Activated CD8-positive, alpha-beta T cell treated with anti-CD3 and anti-CD28 coated beads for 36 hours (primary cell): ENCODE measurements at regions of chr12 and their contacts with region 1.

Region 1: DNA sequence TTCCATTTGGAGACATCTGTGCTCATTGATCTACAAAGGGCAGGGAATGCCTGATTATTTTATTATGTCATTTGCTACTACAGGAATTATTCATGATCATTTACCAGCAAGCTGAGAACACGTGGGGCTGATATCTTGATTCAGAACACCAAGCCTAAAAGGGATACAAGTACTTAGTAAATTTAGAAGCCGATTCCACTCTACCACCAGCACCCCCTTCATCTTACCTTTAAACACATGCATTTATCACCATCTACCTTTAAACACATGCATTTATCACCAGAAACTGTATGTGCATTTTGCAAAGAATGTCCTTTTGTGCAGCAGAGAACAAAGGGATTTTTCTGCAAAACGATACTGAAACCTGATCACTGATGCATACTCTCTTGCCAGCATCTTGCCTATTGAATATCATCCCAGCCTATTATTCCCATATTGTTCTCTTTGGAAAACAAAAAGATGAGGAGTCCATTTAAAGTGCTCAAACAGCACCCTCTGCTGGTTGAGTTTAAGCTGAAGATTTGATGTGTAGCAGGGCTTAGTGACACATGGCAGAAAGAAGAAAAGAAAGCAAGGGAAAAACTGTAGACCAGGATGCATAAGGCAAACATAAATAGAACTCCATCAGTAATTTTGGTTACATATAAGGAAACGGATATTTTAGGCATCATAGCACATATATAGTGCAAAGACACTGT is 132.6 kb upstream of the PLEKHG7 start:
- DNase-seq: peak; percentile 66
- ATAC-seq: peak; percentile 89
- H3K4me3 Mint-ChIP-seq: no peak overlapping the region
- H3K27ac Mint-ChIP-seq: no peak overlapping the region
- H3K4me1 Mint-ChIP-seq: peaks cover 19% of the 10 kb centered on the region
- H3K27me3 Mint-ChIP-seq: no peaks in the 10 kb centered on the region
- CTCF ChIP-seq: peak; percentile 97

Region 2: DNA sequence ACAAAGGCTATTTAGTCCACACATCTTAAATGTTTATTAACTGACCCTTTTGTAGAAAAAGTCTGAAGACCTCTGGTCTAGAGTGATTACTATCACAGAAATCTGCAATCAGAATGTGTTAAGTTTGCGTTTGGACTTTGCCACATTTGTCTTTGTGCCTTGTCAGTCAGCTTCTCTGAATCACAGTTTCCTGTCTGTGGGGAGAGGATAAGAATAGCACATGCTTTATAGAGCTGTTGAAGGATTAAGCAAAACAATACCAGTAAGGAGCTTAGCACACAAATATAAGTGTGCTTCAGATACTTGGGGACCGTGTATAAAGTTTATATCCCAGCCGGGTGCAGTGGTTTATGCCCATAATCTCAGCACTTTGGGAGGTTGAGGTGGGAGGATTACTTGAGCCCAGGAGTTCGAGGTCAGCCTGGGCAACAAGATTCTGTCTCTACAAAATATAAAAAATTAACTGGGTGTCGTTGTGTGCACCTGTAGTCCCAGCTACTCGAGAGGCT is 361.5 kb before region 1 on chr12:
- CTCF ChIA-PET with region 1: interaction called, 3 read pairs
- POLR2A ChIA-PET with region 1: no interaction called
- intact Hi-C with region 1: loop called (anchors 5 kb)
- DNase-seq: peak; percentile 39
- ATAC-seq: peak; percentile 65
- H3K4me3 Mint-ChIP-seq: peak overlapping the region; percentile 67
- H3K27ac Mint-ChIP-seq: peak overlapping the region; percentile 96
- H3K4me1 Mint-ChIP-seq: peaks cover 33% of the 10 kb centered on the region
- H3K27me3 Mint-ChIP-seq: no peaks in the 10 kb centered on the region
- CTCF ChIP-seq: no peak

Region 3: DNA sequence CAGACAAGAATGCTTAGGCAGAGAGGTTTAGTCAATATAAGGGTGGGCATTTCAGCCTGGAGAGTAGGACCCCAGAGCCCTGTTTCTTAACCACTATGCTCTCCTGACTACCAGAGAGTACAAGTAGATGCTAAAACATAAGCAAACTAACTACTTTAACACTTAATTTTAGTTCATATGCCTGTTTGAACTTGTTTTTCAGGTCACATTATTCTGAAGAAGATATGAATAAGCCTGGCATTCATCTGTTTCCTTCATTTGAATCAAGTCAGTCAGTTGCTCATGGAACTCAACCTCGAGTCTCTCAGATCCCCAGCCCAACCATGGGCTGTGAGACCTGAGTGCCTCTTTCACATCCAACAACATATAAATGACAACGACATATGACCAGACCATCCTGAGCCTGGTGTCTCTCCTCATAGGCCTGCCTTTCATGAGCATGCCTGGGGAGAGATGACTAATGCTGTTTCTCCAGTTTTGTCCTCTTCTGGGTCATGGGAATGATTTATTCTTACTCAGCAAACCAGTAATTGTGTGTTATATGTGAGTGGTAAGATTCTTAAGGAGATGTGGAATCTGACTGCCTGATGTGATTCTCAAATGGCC is 173.5 kb before region 1 on chr12:
- CTCF ChIA-PET with region 1: interaction called, 10 read pairs
- POLR2A ChIA-PET with region 1: no interaction called
- intact Hi-C with region 1: loop called (anchors 1 kb)
- DNase-seq: no peak
- ATAC-seq: no peak
- H3K4me3 Mint-ChIP-seq: no peak overlapping the region
- H3K27ac Mint-ChIP-seq: peak overlapping the region; percentile 95
- H3K4me1 Mint-ChIP-seq: peaks cover 90% of the 10 kb centered on the region
- H3K27me3 Mint-ChIP-seq: no peaks in the 10 kb centered on the region
- CTCF ChIP-seq: no peak

Region 4: DNA sequence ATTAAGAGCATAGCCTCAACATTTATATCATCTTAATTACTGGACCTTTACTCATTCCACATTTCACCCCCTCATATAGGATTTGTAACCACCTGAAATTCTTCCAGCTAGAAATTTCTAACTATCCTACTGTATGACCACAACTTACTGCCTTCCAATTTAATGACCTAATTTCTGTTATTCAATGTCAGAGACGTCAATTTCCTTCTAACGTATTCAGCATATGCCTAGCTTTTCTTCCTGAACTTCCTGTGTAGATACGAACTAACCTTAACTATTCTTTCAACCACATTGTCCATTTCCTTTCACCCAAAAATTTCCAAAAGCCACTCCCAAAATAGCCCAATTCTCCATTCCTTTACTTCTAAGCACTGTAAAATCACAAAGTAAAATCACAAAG is 250.9 kb after region 1 on chr12:
- CTCF ChIA-PET with region 1: no interaction called
- POLR2A ChIA-PET with region 1: no interaction called
- intact Hi-C with region 1: no loop called
- DNase-seq: no peak
- ATAC-seq: no peak
- H3K4me3 Mint-ChIP-seq: no peak overlapping the region
- H3K27ac Mint-ChIP-seq: no peak overlapping the region
- H3K4me1 Mint-ChIP-seq: no peaks in the 10 kb centered on the region
- H3K27me3 Mint-ChIP-seq: no peaks in the 10 kb centered on the region
- CTCF ChIP-seq: no peak